Endothelial cell of umbilical vein (primary cell): ENCODE measurements at regions of chr11 and their contacts with region 1.

Region 1: GRCh38 chr11:116821050-116821918 is 1.8 kb downstream of the APOA4 start:
- DNase-seq: no peak
- H3K4me3 ChIP-seq: no peak overlapping the region
- H3K27ac ChIP-seq: no peak overlapping the region
- H3K4me1 ChIP-seq: no peaks in the 10 kb centered on the region
- H3K27me3 ChIP-seq: no peaks in the 10 kb centered on the region
- CTCF ChIP-seq: no peak
- POLR2A ChIP-seq: no peak

Region 2: DNA sequence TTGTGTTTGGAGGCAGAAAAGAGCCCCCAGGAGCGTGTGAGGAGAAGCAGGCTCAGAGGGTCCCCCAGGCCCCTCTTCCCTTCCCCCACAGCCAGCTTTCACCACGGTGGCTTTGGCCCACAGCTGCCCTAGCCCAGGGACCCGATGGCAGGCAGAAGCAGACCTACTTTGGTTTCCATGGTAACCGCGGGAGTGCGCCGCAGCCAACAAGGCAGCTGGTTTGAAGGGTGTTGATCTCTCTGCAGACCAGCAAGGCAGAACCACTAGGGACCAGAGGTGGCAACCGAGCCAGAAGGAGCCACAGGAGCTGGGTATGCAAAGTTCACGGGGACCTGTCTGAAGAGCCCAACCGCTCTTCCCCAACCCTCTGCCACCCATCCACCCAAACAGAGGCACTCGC is 117.9 kb before region 1 on chr11:
- CTCF ChIA-PET with region 1: no interaction called
- POLR2A ChIA-PET with region 1: no interaction called
- dilution Hi-C with region 1: no loop called
- intact Hi-C with region 1: no loop called
- DNase-seq: no peak
- H3K4me3 ChIP-seq: no peak overlapping the region
- H3K27ac ChIP-seq: no peak overlapping the region
- H3K4me1 ChIP-seq: no peaks in the 10 kb centered on the region
- H3K27me3 ChIP-seq: peaks cover 3 to 8% of the 10 kb centered on the region in 2 experiments
- CTCF ChIP-seq: no peak
- POLR2A ChIP-seq: no peak

Region 3: DNA sequence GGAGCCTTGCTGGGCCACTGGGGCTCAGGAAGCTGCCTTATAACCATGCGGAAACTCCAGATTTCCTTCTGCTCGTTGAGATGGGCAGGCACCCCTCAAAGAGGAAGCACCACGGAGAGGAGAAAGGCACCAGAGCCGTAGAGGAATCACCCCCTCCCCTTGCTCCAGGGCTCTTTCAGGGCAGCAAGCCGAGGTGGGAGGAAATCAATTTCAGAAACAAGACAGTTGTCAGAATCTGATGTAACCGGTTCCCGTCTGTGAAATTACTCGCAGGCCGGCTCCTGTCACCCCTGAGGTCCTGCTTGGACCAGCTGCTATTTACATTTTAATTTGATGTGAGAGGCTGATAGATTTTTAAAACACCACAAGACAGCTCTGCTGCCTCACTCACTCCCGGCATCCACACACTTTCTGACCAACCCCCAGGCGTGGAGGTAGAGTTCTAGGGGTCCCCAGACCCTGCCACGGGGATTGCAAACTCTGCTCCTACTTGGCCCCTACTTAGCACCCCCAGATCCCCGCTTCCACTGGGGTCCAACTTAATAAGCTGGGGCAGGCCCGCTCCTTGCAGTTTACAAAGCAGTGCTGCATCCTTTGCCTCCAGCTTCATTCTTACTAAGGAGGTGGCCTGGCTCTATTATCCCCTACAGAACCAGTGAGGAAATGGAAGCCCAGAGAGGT is 668.9 kb after region 1 on chr11:
- CTCF ChIA-PET with region 1: no interaction called
- POLR2A ChIA-PET with region 1: no interaction called
- dilution Hi-C with region 1: no loop called
- intact Hi-C with region 1: loop called (anchors 5 kb)
- DNase-seq: no peak
- H3K4me3 ChIP-seq: no peak overlapping the region
- H3K27ac ChIP-seq: no peak overlapping the region
- H3K4me1 ChIP-seq: no peaks in the 10 kb centered on the region
- H3K27me3 ChIP-seq: peaks cover 2 to 6% of the 10 kb centered on the region in 2 experiments
- CTCF ChIP-seq: no peak
- POLR2A ChIP-seq: no peak